Common myeloid progenitor, CD34-positive (primary cell): ENCODE measurements at regions of chr7 and their contacts with region 1.

Region 1: DNA sequence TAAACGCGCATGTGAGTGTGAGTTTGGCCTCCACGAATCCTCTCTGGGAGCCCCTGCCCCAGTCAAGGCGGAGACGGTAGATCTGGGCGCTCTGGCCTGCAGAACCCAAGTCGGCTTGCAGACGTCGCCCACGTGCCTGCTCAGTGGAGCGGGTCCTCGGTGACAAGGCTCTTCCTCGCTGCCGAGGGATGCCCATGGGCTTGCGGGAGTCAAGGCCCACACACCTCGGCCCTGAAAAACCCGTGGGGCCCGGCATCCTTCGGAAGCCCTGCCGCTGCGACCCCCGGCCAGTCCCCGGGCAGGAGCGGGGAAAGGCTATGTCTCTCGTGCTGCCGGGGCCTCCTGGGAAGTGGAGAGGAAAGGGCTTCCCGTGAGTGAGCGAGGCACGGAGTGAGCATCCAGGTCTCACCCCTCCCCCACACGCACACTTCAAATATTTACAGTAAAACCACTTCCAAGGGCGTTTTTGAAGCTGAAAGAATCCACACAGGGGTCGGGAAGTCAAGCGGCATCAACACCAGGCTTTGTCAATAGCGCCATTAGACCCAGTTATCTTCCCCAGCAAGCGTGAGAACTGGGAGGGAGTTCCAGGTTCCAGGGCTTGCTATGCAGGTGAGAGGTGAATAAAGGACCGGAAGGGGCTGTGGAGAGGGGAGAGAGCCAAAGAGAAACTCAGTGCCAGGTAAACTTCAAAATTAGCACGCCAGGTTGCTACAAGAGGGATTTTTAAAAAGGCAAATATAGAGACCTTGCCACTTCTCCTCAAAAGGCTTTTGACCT is 1.1 kb upstream of the MNX1 start:
- DNase-seq: no peak
- H3K4me3 ChIP-seq: peak overlapping the region in 2 of 7 experiments; percentile 61 to 74
- H3K27ac ChIP-seq: no peak overlapping the region
- H3K4me1 ChIP-seq: peaks cover 0 to 30% (median 15%) of the 10 kb centered on the region in 4 experiments
- H3K27me3 ChIP-seq: peaks cover 21 to 97% (median 71%) of the 10 kb centered on the region in 5 experiments

Region 2: DNA sequence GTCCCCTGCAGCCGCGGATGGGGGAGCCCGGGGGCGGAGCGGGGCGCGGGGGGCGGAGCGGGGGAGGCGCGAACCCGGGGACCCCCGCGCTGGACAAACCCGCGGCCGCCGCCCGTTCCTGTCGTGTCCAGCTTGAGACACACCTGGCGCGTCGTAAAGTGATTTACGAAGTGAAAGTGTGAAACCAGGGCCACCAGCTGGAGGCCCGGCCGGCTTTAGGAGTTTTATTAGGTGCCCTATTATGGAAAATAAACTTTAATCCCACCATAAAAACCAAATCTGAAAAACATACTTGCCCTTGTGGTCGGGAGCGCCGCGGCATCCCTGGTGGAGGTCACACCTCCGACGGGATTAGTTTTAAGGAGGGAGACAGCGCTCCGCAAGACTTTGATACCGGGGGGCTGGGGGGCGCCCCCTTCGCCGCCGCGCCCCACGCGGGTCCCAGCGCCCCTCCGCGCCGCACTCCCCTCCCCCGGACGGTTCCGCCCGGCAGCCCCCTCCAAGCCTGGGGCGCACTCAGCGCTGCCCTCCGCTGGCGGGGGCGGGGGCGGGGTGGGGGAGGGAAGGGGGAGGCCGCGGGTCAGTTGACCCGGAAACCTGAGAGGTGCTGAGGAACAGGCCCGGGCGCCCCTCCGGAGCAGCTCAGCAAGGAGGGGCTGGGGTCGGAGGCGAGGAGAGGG is 11.3 kb before region 1 on chr7:
- CTCF ChIA-PET with region 1: interaction called, 11 read pairs
- POLR2A ChIA-PET with region 1: no interaction called
- DNase-seq: no peak
- H3K4me3 ChIP-seq: peak overlapping the region in 5 of 7 experiments; percentile 26 to 66 (median 53)
- H3K27ac ChIP-seq: no peak overlapping the region
- H3K4me1 ChIP-seq: peaks cover 0 to 26% (median 15%) of the 10 kb centered on the region in 4 experiments
- H3K27me3 ChIP-seq: peaks cover 16 to 100% (median 61%) of the 10 kb centered on the region in 5 experiments